Activated T-helper 1 cell treated with anti-CD3 and anti-CD28 coated beads, Interleukin-12 subunit alpha, Interleukin-12 subunit beta, Interleukin-2, Interleukin-4 antibody, amounts not matched to agents 30 ng/mL and 10 ng/mL and 1 ng/mL, durations not matched to agents 14 hours and 24 hours and 36 hours (primary cell): ENCODE measurements at regions of chr16 and their contacts with region 1.

Region 1: GRCh38 chr16:50195756-50196155 is 42.6 kb downstream of the TENT4B start:
- DNase-seq: no peak
- H3K4me3 Mint-ChIP-seq: no peak overlapping the region
- H3K27ac Mint-ChIP-seq: no peak overlapping the region
- H3K4me1 Mint-ChIP-seq: peaks cover 55% of the 10 kb centered on the region
- H3K27me3 Mint-ChIP-seq: no peaks in the 10 kb centered on the region

Region 2: GRCh38 chr16:50161950-50162349 is 33.8 kb before region 1 on chr16:
- intact Hi-C with region 1: loop called (anchors 2 kb)
- DNase-seq: no peak
- H3K4me3 Mint-ChIP-seq: no peak overlapping the region
- H3K27ac Mint-ChIP-seq: no peak overlapping the region
- H3K4me1 Mint-ChIP-seq: peaks cover 49% of the 10 kb centered on the region
- H3K27me3 Mint-ChIP-seq: no peaks in the 10 kb centered on the region

Region 3: DNA sequence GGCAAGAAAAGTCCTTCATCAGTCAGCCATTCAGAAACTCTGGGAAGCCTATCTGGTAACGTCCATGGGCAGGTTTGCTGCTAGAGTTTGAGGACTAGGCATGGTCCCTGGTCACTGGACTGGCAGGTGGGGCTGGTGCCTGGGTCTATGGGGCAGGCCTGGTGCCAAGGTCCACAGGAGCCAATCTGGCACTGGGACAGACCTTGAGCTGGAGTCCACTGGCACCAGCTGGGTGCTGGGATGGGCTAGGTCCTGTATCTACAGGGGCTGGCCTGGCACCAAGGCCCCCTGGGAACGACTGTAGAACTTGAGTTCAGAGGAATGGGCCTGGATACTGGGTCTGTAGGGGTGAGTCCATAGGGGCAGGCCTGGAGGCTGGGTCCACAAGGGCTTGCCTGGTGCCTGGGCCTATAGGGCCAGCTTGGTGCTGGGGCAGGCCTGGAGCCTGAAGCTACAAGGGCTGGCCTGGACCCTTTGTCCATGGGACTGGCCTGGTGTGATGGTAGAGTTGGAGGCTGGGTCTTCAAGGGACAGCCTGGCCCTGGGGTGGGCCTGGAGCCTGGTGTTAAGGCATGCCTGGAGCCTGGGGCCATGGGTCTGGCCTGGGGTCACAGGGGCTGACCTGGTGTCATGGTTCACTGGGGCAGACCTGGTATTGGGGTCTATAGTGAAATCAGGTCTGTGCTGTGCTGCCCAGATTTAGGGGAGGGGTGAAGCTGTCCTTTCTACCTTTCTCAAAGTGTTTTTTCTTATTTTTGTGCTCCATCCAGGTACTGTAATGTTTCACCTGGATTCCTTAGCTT is 321.9 kb after region 1 on chr16:
- intact Hi-C with region 1: no loop called
- DNase-seq: no peak
- H3K4me3 Mint-ChIP-seq: no peak overlapping the region
- H3K27ac Mint-ChIP-seq: no peak overlapping the region
- H3K4me1 Mint-ChIP-seq: no peaks in the 10 kb centered on the region
- H3K27me3 Mint-ChIP-seq: peaks cover 8% of the 10 kb centered on the region